Activated CD8-positive, alpha-beta T cell treated with anti-CD3 and anti-CD28 coated beads for 36 hours (primary cell): ENCODE measurements at regions of chr2 and their contacts with region 1.

Region 1: DNA sequence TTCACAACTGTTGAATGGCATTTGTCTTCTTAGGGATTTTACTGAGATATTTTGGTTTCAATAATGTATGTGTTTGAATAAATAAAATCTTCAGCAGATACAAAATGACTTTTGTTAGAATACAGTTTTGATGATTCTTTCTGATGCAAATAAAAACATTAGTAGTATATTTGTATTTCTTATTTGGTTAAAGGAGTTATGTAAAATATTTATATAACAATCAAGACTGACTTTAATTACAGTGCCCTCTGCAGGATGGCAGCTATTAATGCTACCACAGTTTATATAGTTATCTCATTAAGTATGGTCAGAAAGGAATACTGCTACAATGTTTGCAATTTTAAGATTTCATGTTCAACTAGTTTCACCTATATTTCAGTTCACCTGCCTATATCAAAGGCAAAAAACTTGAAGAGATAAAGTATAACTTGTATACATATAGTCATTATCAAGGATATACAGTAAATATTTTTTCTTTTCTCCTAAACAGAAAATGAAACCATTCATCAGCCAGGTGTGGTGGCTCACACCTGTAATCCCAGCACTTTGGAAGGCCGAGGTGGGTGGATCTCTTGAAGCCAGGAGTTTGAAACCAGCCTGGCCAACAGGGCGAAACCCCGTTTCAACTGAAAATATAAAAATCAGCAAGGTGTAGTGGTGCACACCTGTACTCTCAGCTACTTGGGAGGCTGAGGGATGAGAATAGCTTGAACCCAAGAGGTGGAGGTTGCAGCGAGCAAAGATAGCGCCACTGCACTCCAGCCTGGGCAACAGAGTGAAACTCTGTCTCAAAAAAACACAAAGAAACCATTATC is 19.8 kb downstream of the ARL5A start:
- DNase-seq: no peak
- ATAC-seq: no peak
- H3K4me3 Mint-ChIP-seq: no peak overlapping the region
- H3K27ac Mint-ChIP-seq: no peak overlapping the region
- H3K4me1 Mint-ChIP-seq: peaks cover 3% of the 10 kb centered on the region
- H3K27me3 Mint-ChIP-seq: no peaks in the 10 kb centered on the region
- CTCF ChIP-seq: peak; percentile 66

Region 2: DNA sequence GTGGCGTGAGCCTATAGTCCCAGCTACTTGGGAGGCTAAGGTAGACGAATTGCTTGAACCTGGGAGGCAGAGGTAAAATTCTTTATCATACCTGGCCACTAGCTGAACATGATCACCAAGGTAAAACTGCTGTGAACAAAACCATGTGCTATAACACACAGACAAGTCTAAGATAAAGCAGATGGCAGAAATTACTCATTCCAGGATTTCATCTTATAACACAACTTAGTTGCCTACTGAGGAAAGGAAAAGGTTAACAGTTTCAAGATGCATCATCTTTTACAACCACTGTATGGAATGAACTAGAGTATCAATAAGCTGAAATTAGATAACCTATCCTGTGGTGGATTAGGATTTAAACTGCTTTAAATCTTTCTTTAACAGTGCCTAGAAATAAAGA is 11.5 kb after region 1 on chr2:
- CTCF ChIA-PET with region 1: interaction called, 12 read pairs
- POLR2A ChIA-PET with region 1: interaction called, 3 read pairs
- intact Hi-C with region 1: no loop called
- DNase-seq: no peak
- ATAC-seq: peak; percentile 95
- H3K4me3 Mint-ChIP-seq: no peak overlapping the region
- H3K27ac Mint-ChIP-seq: peak overlapping the region; percentile 70
- H3K4me1 Mint-ChIP-seq: peaks cover 53% of the 10 kb centered on the region
- H3K27me3 Mint-ChIP-seq: no peaks in the 10 kb centered on the region
- CTCF ChIP-seq: no peak